ENCODE measurements at regions of chrX and their contacts with region 1.

Region 1: GRCh38 chrX:40735325-40736169 is at the start of gene MED14:
- DNase-seq: peak; percentile 90
- H3K4me3 Mint-ChIP-seq: peak within 1 kb of the TSS; percentile 85
- H3K27ac Mint-ChIP-seq: peak within 1 kb of the TSS; percentile 97
- H3K4me1 Mint-ChIP-seq: peaks cover 43% of the 10 kb centered on the region
- H3K27me3 Mint-ChIP-seq: no peaks in the 10 kb centered on the region
- total RNA-seq, gene MED14: 47.3 to 50.8 TPM

Region 2: DNA sequence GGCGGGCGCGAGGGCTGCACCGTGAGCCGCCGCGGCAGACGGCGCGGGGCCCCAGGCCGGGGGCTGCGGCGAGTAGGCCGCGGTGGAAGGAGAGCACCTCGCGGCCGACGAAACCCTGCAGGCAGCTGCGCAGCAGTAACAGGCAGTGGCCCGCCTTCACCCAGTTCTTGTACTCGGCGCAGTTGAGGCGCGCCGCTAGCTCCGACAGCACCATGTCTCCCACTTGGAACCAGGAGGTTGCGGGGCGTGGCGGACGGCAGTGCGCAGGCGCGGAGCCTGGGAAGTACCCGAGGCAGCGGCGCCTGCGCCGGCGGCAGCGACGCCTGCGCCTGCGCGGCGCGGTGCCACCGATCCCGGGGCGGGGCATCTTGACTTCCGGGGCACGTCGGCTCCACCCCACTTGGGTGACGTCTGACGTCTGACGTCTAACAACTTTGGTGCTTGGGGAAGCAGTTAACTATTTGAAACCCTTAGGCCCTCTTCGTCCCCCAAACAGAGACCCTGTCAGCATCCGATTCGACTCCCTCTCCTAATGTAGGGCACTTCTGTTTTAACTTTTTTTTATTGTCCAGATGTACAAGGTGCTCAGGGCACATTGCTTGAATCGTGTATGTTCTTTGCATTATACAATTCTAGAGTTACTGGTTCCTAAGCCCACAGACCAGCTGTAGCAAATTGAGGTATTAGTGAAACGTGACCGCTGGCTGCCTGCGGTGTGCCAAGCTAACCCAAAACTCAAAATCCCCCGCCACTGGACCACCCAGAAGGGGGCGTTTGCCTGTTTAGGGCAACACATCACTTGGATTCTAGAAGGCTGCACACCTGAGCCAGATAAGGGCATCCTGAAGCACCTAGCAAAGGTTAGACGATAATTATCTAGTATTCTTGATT is 88.0 kb before region 1 on chrX and contains the start of gene CXorf38:
- CTCF ChIA-PET with region 1: interaction called, 4 read pairs
- intact Hi-C with region 1: loop called (anchors 1 kb)
- DNase-seq: peak; percentile 94
- H3K4me3 Mint-ChIP-seq: peak within 1 kb of the TSS; percentile 84
- H3K27ac Mint-ChIP-seq: peak within 1 kb of the TSS; percentile 91
- H3K4me1 Mint-ChIP-seq: peaks cover 25% of the 10 kb centered on the region
- H3K27me3 Mint-ChIP-seq: no peaks in the 10 kb centered on the region
- total RNA-seq, gene CXorf38: 23.2 to 23.3 TPM

Measured in activated naive CD4-positive, alpha-beta T cell treated with anti-CD3 and anti-CD28 coated beads for 36 hours (primary cell).